GM18951 (cell line): ENCODE measurements at regions of chr12 and their contacts with region 1.

Region 1: GRCh38 chr12:121793838-121794533 is 498 bp upstream of the RHOF start:
- POLR2A ChIP-seq: peak; percentile 51

Region 2: DNA sequence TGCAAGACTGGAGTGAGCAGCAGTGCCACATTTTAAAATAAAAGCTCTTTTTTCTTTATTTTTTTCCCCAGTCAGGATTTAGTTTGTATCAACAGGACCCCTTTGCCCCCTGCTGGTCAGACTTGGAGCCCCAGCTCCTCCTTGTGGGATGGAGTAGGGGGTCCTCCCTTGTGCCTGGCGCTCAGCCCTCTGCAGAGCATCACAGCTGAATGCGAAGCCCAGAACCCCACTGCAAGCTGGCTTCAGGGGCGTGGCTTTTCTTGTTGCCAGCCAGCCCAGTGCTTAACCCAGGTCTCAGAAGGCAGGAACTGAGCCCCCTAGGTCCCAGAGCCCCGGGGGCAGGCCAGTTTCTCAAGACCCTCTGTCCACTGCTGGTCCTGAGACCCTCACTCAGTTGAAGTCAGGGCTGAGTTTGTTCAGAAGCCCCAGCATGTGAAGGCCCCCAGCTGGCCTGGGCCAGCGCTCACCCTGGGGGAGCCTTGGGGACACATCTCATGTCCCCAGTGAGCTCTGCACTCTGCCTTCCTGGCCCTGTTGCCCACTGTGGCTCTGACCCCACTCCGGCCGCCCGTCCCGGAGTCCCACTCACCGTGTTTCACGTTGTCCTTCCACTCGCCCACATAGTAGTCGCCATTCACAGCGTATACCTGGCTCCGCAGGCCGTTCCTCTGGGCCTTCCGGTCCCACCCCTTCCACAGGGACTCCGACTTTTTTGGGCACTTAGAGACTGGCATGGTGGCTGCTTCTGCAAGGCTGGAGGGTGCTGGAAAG is 125.1 kb before region 1 on chr12:
- in situ Hi-C with region 1: no loop called
- POLR2A ChIP-seq: no peak

Region 3: DNA sequence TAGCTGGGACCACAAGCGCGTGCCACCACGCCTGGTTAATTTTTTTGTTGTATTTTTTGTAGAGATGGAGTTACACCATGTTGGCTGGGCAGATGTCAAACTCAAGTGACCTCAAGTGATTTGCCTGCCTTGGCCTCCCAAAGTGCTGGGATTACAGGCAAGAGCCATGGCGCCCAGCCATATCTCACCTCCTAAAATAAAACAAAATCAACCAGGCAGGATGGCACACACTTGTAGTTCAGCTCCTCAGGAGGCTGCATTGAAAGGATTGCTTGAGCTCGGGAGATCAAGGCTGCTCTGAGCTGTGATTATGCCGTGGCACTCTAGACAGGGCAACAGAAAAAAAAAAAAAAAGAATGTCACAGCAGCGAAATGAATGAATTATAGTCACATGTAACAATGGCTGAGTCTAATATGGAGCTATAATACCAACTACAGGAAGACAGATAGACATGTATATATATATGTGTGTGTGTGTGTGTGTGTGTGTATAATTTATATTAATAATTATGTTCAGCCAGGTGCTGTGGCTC is 100.8 kb before region 1 on chr12:
- in situ Hi-C with region 1: loop called (anchors 5 kb)
- POLR2A ChIP-seq: no peak

Region 4: DNA sequence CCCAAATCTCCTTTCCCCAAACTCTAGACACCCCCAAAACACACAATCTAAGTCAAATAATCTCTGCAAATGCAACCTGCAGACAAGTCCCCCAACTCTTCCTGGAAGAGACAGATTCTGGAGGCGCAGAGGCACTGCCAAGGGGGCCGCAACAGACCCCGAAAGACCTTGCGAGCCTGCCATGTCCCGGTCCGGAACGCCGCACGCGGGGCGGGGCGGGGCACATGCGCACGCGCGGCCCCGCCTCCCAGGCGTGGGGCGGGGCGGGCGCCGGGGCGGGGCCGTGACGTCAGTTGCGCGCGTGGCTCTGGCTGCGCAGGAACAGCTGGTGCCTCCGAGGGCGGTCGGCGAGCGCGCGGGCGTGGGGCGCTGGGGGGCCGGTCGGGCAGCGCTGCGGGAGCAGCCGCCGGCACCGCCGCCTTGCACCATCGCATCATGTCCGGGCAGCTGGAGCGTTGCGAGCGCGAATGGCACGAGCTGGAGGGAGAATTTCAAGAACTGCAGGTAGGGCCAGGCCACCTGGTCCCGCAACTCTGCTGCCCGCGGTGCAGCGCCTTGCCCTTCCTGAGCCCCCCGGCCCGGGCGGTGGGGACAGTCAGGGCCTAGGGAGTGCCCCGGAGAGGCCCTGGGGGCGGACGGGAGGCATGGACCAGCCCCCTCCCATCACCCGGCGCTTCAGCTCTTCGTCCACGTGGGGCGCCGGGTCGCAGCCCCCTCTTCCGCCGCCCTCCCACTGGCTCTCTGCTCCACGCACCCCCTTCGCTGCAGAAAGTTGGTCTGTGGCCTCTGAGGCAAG is 81.3 kb before region 1 on chr12 and contains the start of gene TMEM120B:
- in situ Hi-C with region 1: no loop called
- POLR2A ChIP-seq: peak; percentile 89